ENCODE measurements at regions of chr10 and their contacts with region 1.

Region 1: GRCh38 chr10:112140110-112140970 is 43.2 kb downstream of the GPAM start:
- DNase-seq: peak; percentile 44 to 45
- ATAC-seq: peak in 7 of 8 donors; percentile 35 to 80 (median 64)
- H3K4me3 ChIP-seq: no peak overlapping the region
- H3K27ac ChIP-seq: no peak overlapping the region
- H3K4me1 ChIP-seq: peaks cover 0 to 4% (median 0%) of the 10 kb centered on the region in 9 donors
- H3K27me3 ChIP-seq: no peaks in the 10 kb centered on the region
- CTCF ChIP-seq: peak; percentile 54 to 86 (median 77)

Region 2: GRCh38 chr10:111750165-111750849 is 390.0 kb before region 1 on chr10:
- intact Hi-C with region 1: loop called in 7 of 10 experiments (anchors 5 to 10 kb)
- DNase-seq: no peak
- ATAC-seq: no peak
- H3K4me3 ChIP-seq: no peak overlapping the region
- H3K27ac ChIP-seq: no peak overlapping the region
- H3K4me1 ChIP-seq: no peaks in the 10 kb centered on the region
- H3K27me3 ChIP-seq: no peaks in the 10 kb centered on the region
- CTCF ChIP-seq: no peak

Region 3: GRCh38 chr10:111756217-111757061 is 383.9 kb before region 1 on chr10:
- intact Hi-C with region 1: loop called in 7 of 10 experiments (anchors 5 to 10 kb)
- DNase-seq: peak in 1 of 2 donors; percentile 8
- ATAC-seq: peak in 2 of 8 donors; percentile 31 to 37
- H3K4me3 ChIP-seq: no peak overlapping the region
- H3K27ac ChIP-seq: no peak overlapping the region
- H3K4me1 ChIP-seq: no peaks in the 10 kb centered on the region
- H3K27me3 ChIP-seq: peaks cover 0 to 6% (median 0%) of the 10 kb centered on the region in 7 donors
- CTCF ChIP-seq: peak in 8 of 9 donors; percentile 9 to 57 (median 48)

Measured in heart right ventricle (tissue), 16 donors.